Testis (tissue), 5 donors: ENCODE measurements at regions of chr14 and their contacts with region 1.

Region 1: DNA sequence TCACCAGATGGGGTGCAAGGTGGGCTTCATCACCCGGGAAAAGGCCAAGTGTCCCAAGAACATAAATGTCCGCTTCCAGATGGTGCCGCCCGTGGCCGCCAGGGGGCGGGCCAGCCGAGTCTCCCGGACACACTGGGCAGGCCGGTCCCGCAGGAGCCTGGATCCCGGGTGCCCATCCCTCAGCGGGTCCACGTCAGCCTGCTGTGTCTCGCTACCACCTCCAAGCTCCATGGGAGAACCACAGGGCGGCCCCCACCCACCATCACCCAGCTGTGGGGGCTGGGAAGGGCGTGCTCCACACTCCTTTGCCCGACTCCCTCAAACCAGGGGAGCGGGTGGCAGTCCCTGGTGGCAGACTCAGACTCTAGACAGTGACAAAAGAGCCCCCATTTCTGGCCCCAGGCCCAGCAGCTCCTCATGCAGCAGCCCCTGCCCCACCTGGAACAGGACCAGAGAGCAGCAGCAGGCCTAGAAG is 22.0 kb upstream of the NUDT14 start:
- DNase-seq: peak; percentile 78
- H3K4me3 ChIP-seq: no peak overlapping the region
- H3K27ac ChIP-seq: no peak overlapping the region
- H3K4me1 ChIP-seq: peaks cover 15% of the 10 kb centered on the region
- H3K27me3 ChIP-seq: no peaks in the 10 kb centered on the region
- CTCF ChIP-seq: peak; percentile 83 to 90 (median 85)
- POLR2A ChIP-seq: no peak

Region 2: GRCh38 chr14:105281371-105282097 is 78.4 kb after region 1 on chr14:
- intact Hi-C with region 1: loop called (anchors 10 kb)
- DNase-seq: peak; percentile 41
- H3K4me3 ChIP-seq: no peak overlapping the region
- H3K27ac ChIP-seq: no peak overlapping the region
- H3K4me1 ChIP-seq: no peaks in the 10 kb centered on the region
- H3K27me3 ChIP-seq: no peaks in the 10 kb centered on the region
- CTCF ChIP-seq: peak; percentile 28 to 52 (median 44)
- POLR2A ChIP-seq: no peak

Region 3: DNA sequence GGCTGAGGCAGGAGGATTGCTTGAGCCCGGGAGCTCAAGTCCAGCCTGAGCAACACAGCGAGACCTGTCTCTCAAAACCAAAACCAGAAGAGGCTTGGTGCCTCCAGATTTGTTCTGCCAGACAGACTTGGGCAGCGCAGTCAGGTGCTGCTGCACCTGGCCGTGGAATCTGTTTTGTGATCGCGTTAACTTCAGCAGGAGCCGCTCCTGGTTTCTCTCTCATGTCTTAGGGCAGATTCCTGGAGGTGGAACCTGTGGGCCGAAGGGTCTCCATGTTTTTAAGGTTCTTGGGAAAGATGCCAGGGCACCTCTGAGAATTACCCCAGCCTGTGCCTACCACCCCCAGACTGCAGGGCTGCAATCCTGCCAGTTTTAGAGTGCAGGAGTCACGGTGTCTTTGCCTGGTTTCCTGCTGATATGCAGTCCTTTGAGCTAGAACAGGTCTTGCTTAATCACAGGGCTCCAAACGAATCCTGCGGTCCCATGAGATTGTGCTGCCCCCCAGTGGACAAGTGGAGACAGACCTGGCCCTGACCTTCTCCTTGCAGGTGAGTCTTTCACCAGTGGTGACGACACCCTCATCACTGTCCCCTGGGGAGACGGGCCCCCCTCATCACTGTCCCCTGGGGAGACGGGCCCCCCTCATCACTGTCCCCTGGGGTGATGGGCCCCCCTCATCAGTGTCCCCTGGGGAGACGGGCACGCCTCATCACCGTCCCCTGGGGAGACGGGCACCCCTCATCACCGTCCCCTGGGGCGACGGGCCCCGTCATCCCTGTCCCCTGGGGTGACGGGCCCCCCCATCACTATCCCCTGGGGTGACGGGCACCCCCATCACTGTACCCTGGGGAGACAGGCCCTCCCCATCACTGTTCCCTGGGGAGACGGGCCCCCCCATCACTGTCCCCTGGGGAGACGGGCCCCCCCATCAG is 149.1 kb after region 1 on chr14:
- intact Hi-C with region 1: loop called (anchors 5 kb)
- DNase-seq: peak; percentile 85
- H3K4me3 ChIP-seq: no peak overlapping the region
- H3K27ac ChIP-seq: no peak overlapping the region
- H3K4me1 ChIP-seq: no peaks in the 10 kb centered on the region
- H3K27me3 ChIP-seq: no peaks in the 10 kb centered on the region
- CTCF ChIP-seq: peak; percentile 56 to 85 (median 71)
- POLR2A ChIP-seq: no peak

Region 4: GRCh38 chr14:105527661-105528581 is 324.8 kb after region 1 on chr14:
- intact Hi-C with region 1: loop called (anchors 5 kb)
- DNase-seq: peak; percentile 75
- H3K4me3 ChIP-seq: peak overlapping the region; percentile 56 to 71
- H3K27ac ChIP-seq: peak overlapping the region in 1 of 2 donors; percentile 2
- H3K4me1 ChIP-seq: peaks cover 22% of the 10 kb centered on the region
- H3K27me3 ChIP-seq: no peaks in the 10 kb centered on the region
- CTCF ChIP-seq: peak; percentile 69 to 82 (median 80)
- POLR2A ChIP-seq: no peak